Common myeloid progenitor, CD34-positive (primary cell): ENCODE measurements at regions of chr2 and their contacts with region 1.

Region 1: DNA sequence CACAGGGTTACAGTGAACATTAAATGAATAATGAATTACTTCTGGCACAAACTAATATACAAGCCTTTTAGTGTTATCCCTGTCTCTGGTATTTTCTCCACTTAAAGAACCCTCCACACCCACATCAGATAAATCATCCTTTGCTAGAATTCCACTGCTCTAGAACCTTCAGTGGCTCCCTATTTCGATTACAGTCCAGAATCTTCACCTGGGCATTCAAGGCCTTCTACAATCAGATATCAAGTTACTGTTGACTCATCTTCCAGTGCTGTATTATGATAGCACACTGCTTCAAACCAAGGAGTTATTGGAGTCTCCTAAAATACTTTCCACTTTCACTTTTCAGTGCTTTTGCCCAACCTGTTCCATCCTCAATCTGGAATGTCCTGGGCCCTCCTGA is 3.4 kb downstream of the CGREF1 start:
- DNase-seq: no peak
- H3K4me3 ChIP-seq: no peak overlapping the region
- H3K27ac ChIP-seq: no peak overlapping the region
- H3K4me1 ChIP-seq: peaks cover 0 to 14% (median 11%) of the 10 kb centered on the region in 4 experiments
- H3K27me3 ChIP-seq: peaks cover 0 to 15% (median 0%) of the 10 kb centered on the region in 5 experiments

Region 2: GRCh38 chr2:27102329-27102728 is 13.2 kb before region 1 on chr2:
- CTCF ChIA-PET with region 1: interaction called, 10 read pairs
- POLR2A ChIA-PET with region 1: no interaction called
- DNase-seq: no peak
- H3K4me3 ChIP-seq: no peak overlapping the region
- H3K27ac ChIP-seq: no peak overlapping the region
- H3K4me1 ChIP-seq: no peaks in the 10 kb centered on the region
- H3K27me3 ChIP-seq: no peaks in the 10 kb centered on the region

Region 3: DNA sequence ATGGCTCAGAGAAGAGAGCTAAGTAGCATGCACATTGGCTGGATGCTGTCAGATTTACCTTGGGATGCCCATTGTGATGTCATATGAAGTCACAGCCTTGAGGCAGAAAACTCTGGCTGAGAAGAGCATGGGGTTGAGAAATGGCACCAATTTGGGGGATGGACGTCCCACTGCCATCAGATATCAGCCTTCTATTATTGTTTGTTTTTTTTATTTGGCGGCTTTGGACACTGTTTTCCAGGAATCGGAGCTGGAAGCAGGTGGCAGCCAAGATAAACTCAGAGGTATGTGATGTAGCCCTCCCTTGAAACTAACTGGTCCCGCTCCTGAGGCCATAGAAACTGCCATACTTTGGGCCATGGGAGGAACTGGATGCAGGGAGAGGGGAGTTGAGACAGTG is 421.8 kb after region 1 on chr2:
- CTCF ChIA-PET with region 1: no interaction called
- POLR2A ChIA-PET with region 1: no interaction called
- DNase-seq: no peak
- H3K4me3 ChIP-seq: no peak overlapping the region
- H3K27ac ChIP-seq: no peak overlapping the region
- H3K4me1 ChIP-seq: no peaks in the 10 kb centered on the region
- H3K27me3 ChIP-seq: peaks cover 0 to 4% (median 0%) of the 10 kb centered on the region in 5 experiments